Dendritic cell treated with granulocyte-macrophage colony-stimulating factor and Interleukin-4, amounts not matched to agents 40 ng/mL and 50 ng/mL, for 4 days (primary cell): ENCODE measurements at regions of chr4 and their contacts with region 1.

Region 1: GRCh38 chr4:136001791-136002190 is 1530.5 kb downstream of the PCDH18 start:
- H3K4me3 Mint-ChIP-seq: no peak overlapping the region
- H3K27ac Mint-ChIP-seq: no peak overlapping the region
- H3K4me1 Mint-ChIP-seq: no peaks in the 10 kb centered on the region
- H3K27me3 Mint-ChIP-seq: no peaks in the 10 kb centered on the region

Region 2: DNA sequence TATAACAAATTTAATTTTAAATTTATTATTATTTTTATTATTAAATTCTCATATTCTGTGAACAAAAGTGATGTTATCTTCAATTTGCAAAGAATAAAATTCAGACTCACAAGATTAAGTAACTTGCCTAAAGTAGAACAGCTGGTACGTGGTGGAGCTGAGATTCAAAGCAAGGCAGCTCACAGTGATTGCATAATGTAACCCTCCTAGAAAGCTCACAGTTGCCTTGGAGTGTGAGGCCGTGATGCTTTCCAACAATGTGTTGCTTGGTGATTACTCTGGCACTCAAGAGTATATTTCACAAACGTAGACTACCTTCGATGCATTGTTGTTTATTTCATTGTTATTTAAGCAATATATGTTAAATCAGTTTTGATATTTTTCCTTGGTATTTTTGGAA is 761.0 kb before region 1 on chr4:
- intact Hi-C with region 1: no loop called
- H3K4me3 Mint-ChIP-seq: no peak overlapping the region
- H3K27ac Mint-ChIP-seq: no peak overlapping the region
- H3K4me1 Mint-ChIP-seq: no peaks in the 10 kb centered on the region
- H3K27me3 Mint-ChIP-seq: no peaks in the 10 kb centered on the region

Region 3: DNA sequence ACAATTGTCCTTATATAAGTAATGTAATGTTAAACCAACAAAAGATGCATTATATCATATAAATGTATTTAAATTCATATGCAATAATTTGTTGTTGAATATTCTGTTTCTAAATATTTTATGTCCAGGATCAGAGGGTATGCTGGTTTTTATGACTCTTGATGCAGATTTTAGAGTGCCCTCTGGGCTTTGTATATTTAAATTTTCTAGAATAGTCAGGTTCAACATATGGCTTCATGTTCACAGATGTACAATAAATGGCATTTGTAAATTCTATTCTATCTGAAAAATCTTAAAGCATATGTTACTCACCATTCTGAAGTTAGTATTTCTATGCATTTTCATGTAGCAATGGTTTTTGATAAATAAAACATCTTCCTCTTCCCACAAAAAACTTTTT is 24.9 kb before region 1 on chr4:
- intact Hi-C with region 1: loop called (anchors 1 kb)
- H3K4me3 Mint-ChIP-seq: no peak overlapping the region
- H3K27ac Mint-ChIP-seq: no peak overlapping the region
- H3K4me1 Mint-ChIP-seq: no peaks in the 10 kb centered on the region
- H3K27me3 Mint-ChIP-seq: no peaks in the 10 kb centered on the region